ENCODE measurements at regions of chr16 and their contacts with region 1.

Region 1: DNA sequence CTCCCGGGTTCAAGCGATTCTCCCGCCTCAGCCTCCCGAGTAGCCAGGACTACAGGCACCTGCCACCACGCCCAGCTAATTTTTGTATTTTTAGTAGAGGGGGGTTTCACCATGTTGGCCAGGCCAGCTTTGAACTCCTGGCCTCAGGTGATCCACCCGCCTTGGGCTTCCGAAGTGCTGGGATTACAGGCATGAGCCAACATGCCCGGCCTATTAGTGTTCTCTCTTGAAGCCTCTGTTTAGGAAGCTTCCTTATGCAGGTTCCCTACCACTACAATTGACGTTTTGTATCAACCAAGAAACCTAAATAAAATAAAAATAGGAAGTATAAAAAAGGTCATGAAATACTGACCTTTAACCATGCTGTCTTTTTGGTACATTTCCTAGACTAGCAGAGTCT is 16.0 kb downstream of the CHST5 start:
- DNase-seq: no peak
- H3K4me3 ChIP-seq: no peak overlapping the region
- H3K4me3 Mint-ChIP-seq: no peak overlapping the region
- H3K27ac ChIP-seq: no peak overlapping the region
- H3K27ac Mint-ChIP-seq: no peak overlapping the region
- H3K4me1 ChIP-seq: peaks cover 8% of the 10 kb centered on the region
- H3K4me1 Mint-ChIP-seq: peaks cover 10 to 20% (median 16%) of the 10 kb centered on the region in 4 donors
- H3K27me3 ChIP-seq: no peaks in the 10 kb centered on the region
- H3K27me3 Mint-ChIP-seq: no peaks in the 10 kb centered on the region

Region 2: GRCh38 chr16:75198135-75198600 is 321.7 kb before region 1 on chr16:
- CTCF ChIA-PET with region 1: interaction called, 8 read pairs
- POLR2A ChIA-PET with region 1: interaction called, 5 read pairs
- intact Hi-C with region 1: loop called (anchors 1 kb)
- DNase-seq: no peak
- H3K4me3 ChIP-seq: no peak overlapping the region
- H3K4me3 Mint-ChIP-seq: no peak overlapping the region
- H3K27ac ChIP-seq: no peak overlapping the region
- H3K27ac Mint-ChIP-seq: no peak overlapping the region
- H3K4me1 ChIP-seq: peaks cover 14% of the 10 kb centered on the region
- H3K4me1 Mint-ChIP-seq: peaks cover 12 to 22% (median 14%) of the 10 kb centered on the region in 4 donors
- H3K27me3 ChIP-seq: no peaks in the 10 kb centered on the region
- H3K27me3 Mint-ChIP-seq: peaks cover 10 to 14% of the 10 kb centered on the region in 2 donors

Region 3: GRCh38 chr16:75471723-75472633 is 47.9 kb before region 1 on chr16:
- CTCF ChIA-PET with region 1: interaction called, 46 read pairs
- POLR2A ChIA-PET with region 1: no interaction called
- intact Hi-C with region 1: no loop called
- DNase-seq: peak in 4 of 5 donors; percentile 36 to 51 (median 48)
- H3K4me3 ChIP-seq: no peak overlapping the region
- H3K4me3 Mint-ChIP-seq: no peak overlapping the region
- H3K27ac ChIP-seq: no peak overlapping the region
- H3K27ac Mint-ChIP-seq: peak overlapping the region in 3 of 7 donors; percentile 26 to 58 (median 56)
- H3K4me1 ChIP-seq: no peaks in the 10 kb centered on the region
- H3K4me1 Mint-ChIP-seq: peaks cover 0 to 4% (median 3%) of the 10 kb centered on the region in 4 donors
- H3K27me3 ChIP-seq: no peaks in the 10 kb centered on the region
- H3K27me3 Mint-ChIP-seq: no peaks in the 10 kb centered on the region

Region 4: DNA sequence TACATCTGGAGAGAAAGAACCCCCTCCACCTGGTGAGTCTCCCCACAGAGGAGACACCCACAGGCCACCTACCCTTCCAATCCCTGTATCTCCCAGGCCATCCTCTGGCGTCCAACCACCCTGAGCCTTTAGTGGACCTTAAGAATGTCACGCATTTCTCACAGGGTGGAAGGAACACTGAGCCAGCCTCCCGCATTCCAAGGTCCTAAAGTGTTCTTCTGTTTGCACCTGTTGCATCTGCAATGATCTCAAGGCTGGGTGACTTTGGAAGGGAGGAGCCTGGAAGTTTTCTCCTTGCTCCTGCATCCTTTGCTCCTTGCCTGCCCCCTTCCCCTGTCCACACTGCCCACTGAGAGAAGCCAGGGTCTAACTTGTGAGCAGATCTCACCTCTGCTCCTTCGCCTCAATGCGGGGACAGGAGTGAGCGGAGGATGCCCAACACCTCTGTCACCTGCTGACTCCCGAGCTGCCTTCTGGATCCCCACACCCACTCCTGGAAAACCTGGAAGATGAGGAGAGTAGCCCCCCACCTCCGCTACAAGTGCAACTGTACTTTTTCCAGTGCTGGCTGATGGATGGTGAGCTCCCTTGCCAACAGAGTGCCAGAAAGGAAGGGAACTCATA is 12.4 kb after region 1 on chr16:
- CTCF ChIA-PET with region 1: interaction called, 11 read pairs
- POLR2A ChIA-PET with region 1: no interaction called
- intact Hi-C with region 1: no loop called
- DNase-seq: no peak
- H3K4me3 ChIP-seq: no peak overlapping the region
- H3K4me3 Mint-ChIP-seq: no peak overlapping the region
- H3K27ac ChIP-seq: no peak overlapping the region
- H3K27ac Mint-ChIP-seq: no peak overlapping the region
- H3K4me1 ChIP-seq: no peaks in the 10 kb centered on the region
- H3K4me1 Mint-ChIP-seq: no peaks in the 10 kb centered on the region
- H3K27me3 ChIP-seq: no peaks in the 10 kb centered on the region
- H3K27me3 Mint-ChIP-seq: no peaks in the 10 kb centered on the region

Region 5: GRCh38 chr16:75555707-75556430 is 36.0 kb after region 1 on chr16 and contains the start of gene TMEM231:
- CTCF ChIA-PET with region 1: interaction called, 19 read pairs
- POLR2A ChIA-PET with region 1: interaction called, 12 read pairs
- intact Hi-C with region 1: loop called (anchors 1 kb)
- DNase-seq: peak; percentile 94 to 98 (median 96)
- H3K4me3 ChIP-seq: peak within 1 kb of the TSS; percentile 75 to 76
- H3K4me3 Mint-ChIP-seq: peak within 1 kb of the TSS; percentile 87 to 95 (median 90)
- H3K27ac ChIP-seq: peak within 1 kb of the TSS; percentile 68
- H3K27ac Mint-ChIP-seq: peak within 1 kb of the TSS; percentile 89 to 98 (median 95)
- H3K4me1 ChIP-seq: peaks cover 15% of the 10 kb centered on the region
- H3K4me1 Mint-ChIP-seq: peaks cover 3 to 16% (median 10%) of the 10 kb centered on the region in 4 donors
- H3K27me3 ChIP-seq: no peaks in the 10 kb centered on the region
- H3K27me3 Mint-ChIP-seq: peaks cover 0 to 1% of the 10 kb centered on the region in 2 donors
- total RNA-seq, gene TMEM231: 2.4 to 2.6 TPM

Region 6: GRCh38 chr16:75622761-75623605 is 103.1 kb after region 1 on chr16 and contains the start of gene ADAT1:
- CTCF ChIA-PET with region 1: interaction called, 19 read pairs
- POLR2A ChIA-PET with region 1: interaction called, 9 read pairs
- intact Hi-C with region 1: loop called (anchors 1 kb)
- DNase-seq: peak; percentile 95 to 99 (median 98)
- H3K4me3 ChIP-seq: peak within 1 kb of the TSS; percentile 86 to 90
- H3K4me3 Mint-ChIP-seq: peak within 1 kb of the TSS; percentile 90 to 98 (median 97)
- H3K27ac ChIP-seq: peak within 1 kb of the TSS; percentile 96
- H3K27ac Mint-ChIP-seq: peak within 1 kb of the TSS; percentile 97 to 99 (median 98)
- H3K4me1 ChIP-seq: peaks cover 59% of the 10 kb centered on the region
- H3K4me1 Mint-ChIP-seq: peaks cover 46 to 87% (median 58%) of the 10 kb centered on the region in 4 donors
- H3K27me3 ChIP-seq: no peaks in the 10 kb centered on the region
- H3K27me3 Mint-ChIP-seq: peaks cover 0 to 3% of the 10 kb centered on the region in 2 donors
- total RNA-seq, gene ADAT1: 88.3 to 93.9 TPM